H1 (cell line): ENCODE measurements at regions of chrX and their contacts with region 1.

Region 1: GRCh38 chrX:50204364-50204899 is at the start of gene CCNB3:
- DNase-seq: peak in 1 of 2 experiments; percentile 55
- H3K4me3 ChIP-seq: peak within 1 kb of the TSS in 1 of 4 experiments; percentile 49; a peak in 2 of 8 replicates
- H3K27ac ChIP-seq: no peak within 1 kb of the TSS
- H3K4me1 ChIP-seq: peaks cover 0 to 4% (median 1%) of the 10 kb centered on the region in 4 experiments; a peak in 4 of 7 replicates
- H3K27me3 ChIP-seq: no peaks in the 10 kb centered on the region
- CTCF ChIP-seq: peak; percentile 44 to 90 (median 53)
- EP300 ChIP-seq: no peak
- POLR2A ChIP-seq: no peak
- RAD21 ChIP-seq: peak; percentile 61 to 68
- total RNA-seq, gene CCNB3: 0.09 TPM in 1 of 2 replicates, not detected in the other

Region 2: DNA sequence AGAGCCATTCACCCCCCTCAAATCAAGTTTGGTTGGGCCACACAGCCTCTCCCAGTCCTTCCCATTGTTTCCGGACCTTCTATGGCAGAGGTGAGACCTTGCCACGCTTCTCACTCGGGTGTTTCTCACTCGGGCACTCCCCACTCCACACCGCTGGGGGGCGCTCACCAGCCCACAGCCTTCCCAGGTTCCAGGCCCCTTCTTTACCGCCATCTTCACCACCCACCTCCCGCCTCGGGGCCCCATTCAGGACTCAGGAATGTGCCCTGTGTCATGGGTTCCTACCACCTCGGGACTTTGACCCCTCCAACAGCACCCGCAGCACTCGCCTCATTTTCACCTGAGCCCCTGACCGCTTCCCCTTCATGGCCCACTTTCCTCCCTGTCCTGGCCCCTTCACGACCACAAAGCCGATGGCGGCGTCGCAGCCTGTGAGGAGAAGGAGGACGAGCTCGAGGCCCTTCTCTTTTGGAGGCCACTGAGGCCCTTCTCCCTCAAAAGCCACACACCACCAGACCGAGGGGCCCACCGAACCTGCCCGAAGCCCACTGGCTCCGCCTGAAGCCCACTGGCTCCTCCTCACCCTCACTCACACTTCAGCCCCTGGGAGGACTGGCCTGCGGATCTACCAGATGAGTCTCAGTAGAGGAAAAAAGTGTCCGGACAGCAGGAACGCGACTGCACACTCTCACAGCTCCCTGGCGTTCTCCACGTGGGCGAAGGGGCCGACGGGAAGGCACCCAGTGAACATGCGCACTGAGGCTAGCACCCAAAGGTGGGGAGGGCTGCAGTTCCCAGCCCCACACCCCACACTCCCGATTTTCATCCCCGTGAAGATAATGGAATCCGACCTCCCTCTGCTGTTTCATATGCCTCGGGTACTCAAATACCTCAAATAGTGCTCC is 508.9 kb before region 1 on chrX and contains the start of gene PAGE1:
- CTCF ChIA-PET with region 1: no interaction called
- POLR2A ChIA-PET with region 1: no interaction called
- DNase-seq: no peak
- H3K4me3 ChIP-seq: no peak within 1 kb of the TSS
- H3K27ac ChIP-seq: no peak within 1 kb of the TSS
- H3K4me1 ChIP-seq: no peaks in the 10 kb centered on the region
- H3K27me3 ChIP-seq: no peaks in the 10 kb centered on the region
- CTCF ChIP-seq: no peak
- EP300 ChIP-seq: no peak
- POLR2A ChIP-seq: no peak
- RAD21 ChIP-seq: no peak
- total RNA-seq, gene PAGE1: not detected in 2 replicates

Region 3: GRCh38 chrX:49884290-49884862 is 320.1 kb before region 1 on chrX:
- CTCF ChIA-PET with region 1: interaction called, 12 read pairs
- POLR2A ChIA-PET with region 1: no interaction called
- DNase-seq: peak; percentile 19 to 70
- H3K4me3 ChIP-seq: no peak overlapping the region
- H3K27ac ChIP-seq: no peak overlapping the region
- H3K4me1 ChIP-seq: peaks cover 0 to 5% (median 3%) of the 10 kb centered on the region in 4 experiments; a peak in 3 of 7 replicates
- H3K27me3 ChIP-seq: no peaks in the 10 kb centered on the region
- CTCF ChIP-seq: peak; percentile 69 to 76 (median 76)
- EP300 ChIP-seq: no peak
- POLR2A ChIP-seq: no peak
- RAD21 ChIP-seq: peak; percentile 52 to 55

Region 4: DNA sequence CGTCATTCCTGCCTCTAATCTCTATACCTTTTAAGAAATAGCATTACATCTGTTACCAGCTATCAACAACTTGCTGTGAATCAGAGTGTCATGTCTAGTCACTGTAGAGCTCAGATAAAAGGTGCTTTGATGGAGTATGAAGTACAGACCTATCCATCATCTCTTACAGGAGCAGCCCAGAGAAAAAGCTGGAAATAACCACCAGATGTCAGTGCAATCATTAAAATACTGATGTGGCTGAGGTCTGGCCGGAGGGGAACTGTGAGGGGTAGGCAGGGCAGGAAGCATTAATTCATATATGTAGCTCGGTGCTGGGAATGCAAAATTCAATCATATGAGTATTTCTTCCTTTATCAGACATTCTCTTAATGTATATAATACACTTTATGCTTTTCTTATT is 104.2 kb before region 1 on chrX:
- CTCF ChIA-PET with region 1: interaction called, 76 read pairs
- POLR2A ChIA-PET with region 1: no interaction called
- DNase-seq: no peak
- H3K4me3 ChIP-seq: no peak overlapping the region
- H3K27ac ChIP-seq: no peak overlapping the region
- H3K4me1 ChIP-seq: no peaks in the 10 kb centered on the region
- H3K27me3 ChIP-seq: no peaks in the 10 kb centered on the region
- CTCF ChIP-seq: peak in 2 of 3 experiments; percentile 45 to 64; a peak in 3 of 4 replicates
- EP300 ChIP-seq: no peak
- POLR2A ChIP-seq: no peak
- RAD21 ChIP-seq: peak; percentile 77 to 84

Region 5: DNA sequence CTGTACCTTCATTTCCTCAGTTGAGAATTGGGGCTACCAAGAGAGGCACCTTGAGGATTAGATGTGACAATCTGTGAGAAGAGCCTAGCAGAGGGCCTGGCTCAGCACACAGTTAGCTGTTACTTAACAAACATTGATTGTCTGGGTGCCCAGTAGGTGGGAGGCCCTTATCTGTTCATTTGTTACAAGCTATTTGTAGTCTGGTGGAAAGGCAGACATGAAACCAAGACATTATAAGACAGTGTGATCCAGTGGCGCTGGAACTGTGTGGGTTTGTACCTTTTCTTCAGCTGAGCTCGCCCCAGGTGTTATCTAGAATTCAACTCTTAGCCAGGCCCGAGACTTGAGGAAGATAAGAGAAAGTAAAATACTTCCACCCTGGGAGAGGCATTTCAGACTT is 20.5 kb before region 1 on chrX:
- CTCF ChIA-PET with region 1: interaction called, 11 read pairs
- POLR2A ChIA-PET with region 1: no interaction called
- DNase-seq: no peak
- H3K4me3 ChIP-seq: no peak overlapping the region
- H3K27ac ChIP-seq: no peak overlapping the region
- H3K4me1 ChIP-seq: peaks cover 0 to 2% (median 0%) of the 10 kb centered on the region in 4 experiments; a peak in 2 of 7 replicates
- H3K27me3 ChIP-seq: no peaks in the 10 kb centered on the region
- CTCF ChIP-seq: no peak
- EP300 ChIP-seq: no peak
- POLR2A ChIP-seq: no peak
- RAD21 ChIP-seq: no peak

Region 6: GRCh38 chrX:50188859-50189600 is 15.4 kb before region 1 on chrX:
- CTCF ChIA-PET with region 1: interaction called, 11 read pairs
- POLR2A ChIA-PET with region 1: no interaction called
- DNase-seq: no peak
- H3K4me3 ChIP-seq: no peak overlapping the region
- H3K27ac ChIP-seq: no peak overlapping the region
- H3K4me1 ChIP-seq: peaks cover 0 to 2% (median 0%) of the 10 kb centered on the region in 4 experiments; a peak in 2 of 7 replicates
- H3K27me3 ChIP-seq: no peaks in the 10 kb centered on the region
- CTCF ChIP-seq: no peak
- EP300 ChIP-seq: no peak
- POLR2A ChIP-seq: no peak
- RAD21 ChIP-seq: no peak